Activated CD4-positive, alpha-beta memory T cell treated with anti-CD3 and anti-CD28 coated beads for 36 hours (primary cell): ENCODE measurements at regions of chr1 and their contacts with region 1.

Region 1: DNA sequence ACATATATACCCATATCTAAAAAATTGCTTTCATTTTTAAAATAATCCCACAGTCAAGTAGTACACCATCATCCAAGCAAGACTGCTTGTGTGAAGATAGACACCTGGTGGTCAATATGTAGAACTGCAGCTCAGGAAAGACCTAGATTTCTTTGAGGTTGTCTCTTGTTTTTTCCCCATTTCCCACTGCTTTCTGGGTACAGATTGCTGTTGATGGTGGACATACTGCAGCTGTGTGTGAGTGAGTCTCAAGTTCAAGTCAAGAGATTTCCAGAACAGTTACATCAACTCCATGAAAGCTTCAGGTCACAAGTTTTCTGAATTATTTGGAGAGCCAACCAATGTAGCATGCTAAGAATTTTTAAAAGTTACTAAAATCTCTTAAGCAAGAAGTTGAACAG is 306.4 kb downstream of the DUSP10 start:
- DNase-seq: no peak
- H3K4me3 Mint-ChIP-seq: no peak overlapping the region
- H3K27ac Mint-ChIP-seq: no peak overlapping the region
- H3K4me1 Mint-ChIP-seq: peaks cover 30% of the 10 kb centered on the region
- H3K27me3 Mint-ChIP-seq: peaks cover 6% of the 10 kb centered on the region

Region 2: GRCh38 chr1:220873868-220874655 is 561.4 kb before region 1 on chr1:
- CTCF ChIA-PET with region 1: interaction called, 3 read pairs
- POLR2A ChIA-PET with region 1: no interaction called
- intact Hi-C with region 1: loop called (anchors 1 kb)
- DNase-seq: no peak
- H3K4me3 Mint-ChIP-seq: no peak overlapping the region
- H3K27ac Mint-ChIP-seq: no peak overlapping the region
- H3K4me1 Mint-ChIP-seq: peaks cover 20% of the 10 kb centered on the region
- H3K27me3 Mint-ChIP-seq: peaks cover 67% of the 10 kb centered on the region

Region 3: GRCh38 chr1:221203224-221204054 is 232.1 kb before region 1 on chr1:
- CTCF ChIA-PET with region 1: interaction called, 15 read pairs
- POLR2A ChIA-PET with region 1: no interaction called
- intact Hi-C with region 1: loop called (anchors 5 kb)
- DNase-seq: peak; percentile 75
- H3K4me3 Mint-ChIP-seq: no peak overlapping the region
- H3K27ac Mint-ChIP-seq: no peak overlapping the region
- H3K4me1 Mint-ChIP-seq: no peaks in the 10 kb centered on the region
- H3K27me3 Mint-ChIP-seq: peaks cover 2% of the 10 kb centered on the region

Region 4: GRCh38 chr1:221449801-221450470 is 14.4 kb after region 1 on chr1:
- CTCF ChIA-PET with region 1: interaction called, 8 read pairs
- POLR2A ChIA-PET with region 1: no interaction called
- intact Hi-C with region 1: loop called (anchors 1 kb)
- DNase-seq: peak; percentile 25
- H3K4me3 Mint-ChIP-seq: no peak overlapping the region
- H3K27ac Mint-ChIP-seq: no peak overlapping the region
- H3K4me1 Mint-ChIP-seq: peaks cover 14% of the 10 kb centered on the region
- H3K27me3 Mint-ChIP-seq: peaks cover 7% of the 10 kb centered on the region

Region 5: GRCh38 chr1:221602866-221603265 is 167.4 kb after region 1 on chr1:
- CTCF ChIA-PET with region 1: no interaction called
- POLR2A ChIA-PET with region 1: no interaction called
- intact Hi-C with region 1: no loop called
- DNase-seq: no peak
- H3K4me3 Mint-ChIP-seq: no peak overlapping the region
- H3K27ac Mint-ChIP-seq: no peak overlapping the region
- H3K4me1 Mint-ChIP-seq: no peaks in the 10 kb centered on the region
- H3K27me3 Mint-ChIP-seq: peaks cover 1% of the 10 kb centered on the region

Region 6: GRCh38 chr1:221777431-221778072 is 342.0 kb after region 1 on chr1:
- CTCF ChIA-PET with region 1: interaction called, 3 read pairs
- POLR2A ChIA-PET with region 1: interaction called, 3 read pairs
- intact Hi-C with region 1: loop called (anchors 1 kb)
- DNase-seq: peak; percentile 73
- H3K4me3 Mint-ChIP-seq: peak overlapping the region; percentile 38
- H3K27ac Mint-ChIP-seq: peak overlapping the region; percentile 79
- H3K4me1 Mint-ChIP-seq: peaks cover 71% of the 10 kb centered on the region
- H3K27me3 Mint-ChIP-seq: no peaks in the 10 kb centered on the region